ENCODE measurements at regions of chr7 and their contacts with region 1.

Region 1: GRCh38 chr7:44695381-44696155 is 53.1 kb upstream of the ZMIZ2 start:
- DNase-seq: no peak
- H3K4me3 ChIP-seq: no peak overlapping the region
- H3K27ac ChIP-seq: no peak overlapping the region
- H3K4me1 ChIP-seq: no peaks in the 10 kb centered on the region
- H3K27me3 ChIP-seq: no peaks in the 10 kb centered on the region
- CTCF ChIP-seq: no peak

Region 2: GRCh38 chr7:44655341-44655740 is 40.2 kb before region 1 on chr7:
- CTCF ChIA-PET with region 1: no interaction called
- dilution Hi-C with region 1: loop called (anchors 5 kb)
- in situ Hi-C with region 1: no loop called
- intact Hi-C with region 1: no loop called
- DNase-seq: no peak
- H3K4me3 ChIP-seq: no peak overlapping the region
- H3K27ac ChIP-seq: no peak overlapping the region
- H3K4me1 ChIP-seq: no peaks in the 10 kb centered on the region
- H3K27me3 ChIP-seq: no peaks in the 10 kb centered on the region
- CTCF ChIP-seq: no peak

Region 3: DNA sequence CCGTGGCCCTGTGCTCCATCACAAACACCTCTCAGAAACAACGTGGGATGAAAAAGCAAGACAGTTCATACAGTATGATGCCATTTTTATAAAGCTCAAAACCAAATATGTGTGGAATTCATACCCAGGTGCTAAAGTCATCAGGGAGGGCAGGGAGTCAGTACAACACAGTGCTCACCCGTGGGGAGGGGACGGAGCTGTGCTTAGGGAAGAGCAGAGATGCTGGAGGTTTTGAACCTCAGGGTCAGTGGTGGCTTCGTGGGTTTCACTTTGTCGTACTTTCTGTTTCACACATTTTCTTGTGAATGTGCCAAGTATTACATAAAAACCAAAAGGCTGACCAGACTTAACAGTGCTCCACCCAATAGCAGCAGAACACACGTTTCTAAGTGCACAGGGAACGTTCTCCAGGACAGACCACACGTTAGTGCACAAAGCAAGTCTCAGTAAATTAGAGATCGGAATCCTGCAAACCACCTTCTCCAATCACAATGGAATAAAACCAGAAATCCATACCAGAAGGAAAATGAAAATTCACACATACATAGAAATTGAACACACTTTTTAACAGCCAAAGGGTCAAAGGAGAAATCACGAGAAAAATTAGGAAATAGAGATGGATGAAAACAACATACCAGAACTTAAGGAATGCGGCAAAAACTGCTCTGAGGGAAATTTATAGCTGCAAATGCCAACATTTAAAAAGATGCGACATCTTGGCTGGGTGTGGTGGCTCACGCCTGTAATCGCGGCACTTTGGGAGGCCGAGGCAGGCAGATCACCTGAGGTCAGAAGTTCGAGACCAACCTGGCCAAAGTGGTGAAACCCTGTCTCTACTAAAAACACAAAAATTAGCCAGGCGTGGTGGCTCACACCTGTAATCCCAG is 74.5 kb after region 1 on chr7:
- CTCF ChIA-PET with region 1: no interaction called
- dilution Hi-C with region 1: loop called (anchors 5 kb)
- in situ Hi-C with region 1: no loop called
- intact Hi-C with region 1: no loop called
- DNase-seq: peak; percentile 41
- H3K4me3 ChIP-seq: no peak overlapping the region
- H3K27ac ChIP-seq: no peak overlapping the region
- H3K4me1 ChIP-seq: peaks cover 19% of the 10 kb centered on the region
- H3K27me3 ChIP-seq: no peaks in the 10 kb centered on the region
- CTCF ChIP-seq: no peak

Measured in mammary epithelial cell (primary cell).